ENCODE measurements at regions of chr4 and their contacts with region 1.

Region 1: DNA sequence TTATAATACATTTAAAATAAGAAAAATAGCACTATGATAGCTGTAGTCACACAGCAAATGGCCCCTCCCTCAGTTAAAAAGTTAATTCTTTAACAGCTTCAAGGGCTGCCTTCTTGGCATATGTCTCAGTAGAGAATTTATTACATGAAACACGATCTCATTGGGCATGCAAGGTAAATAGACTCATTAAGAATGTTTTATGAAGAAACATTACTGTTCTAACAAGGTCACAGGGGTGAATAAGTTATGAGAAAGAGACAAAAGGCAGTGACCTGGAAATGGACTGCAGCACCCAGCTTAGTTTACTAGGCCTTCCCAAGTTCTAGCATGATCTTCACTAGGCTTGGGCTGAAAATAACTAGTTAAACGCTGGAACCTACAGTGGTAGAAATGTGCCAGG is 277.7 kb downstream of the NR3C2 start:
- DNase-seq: no peak
- ATAC-seq: no peak
- H3K4me3 ChIP-seq: no peak overlapping the region
- H3K27ac ChIP-seq: no peak overlapping the region
- H3K4me1 ChIP-seq: no peaks in the 10 kb centered on the region
- H3K27me3 ChIP-seq: no peaks in the 10 kb centered on the region; a peak in 1 of 4 replicates
- CTCF ChIP-seq: no peak
- EP300 ChIP-seq: no peak
- POLR2A ChIP-seq: no peak
- RAD21 ChIP-seq: no peak

Region 2: GRCh38 chr4:147916351-147916750 is 248.2 kb before region 1 on chr4:
- CTCF ChIA-PET with region 1: no interaction called
- POLR2A ChIA-PET with region 1: no interaction called
- RAD21 ChIA-PET with region 1: no interaction called
- SMC1A ChIA-PET with region 1: no interaction called
- in situ Hi-C with region 1: no loop called
- intact Hi-C with region 1: loop called (anchors 5 kb)
- DNase-seq: no peak
- ATAC-seq: no peak
- H3K4me3 ChIP-seq: no peak overlapping the region
- H3K27ac ChIP-seq: no peak overlapping the region
- H3K4me1 ChIP-seq: no peaks in the 10 kb centered on the region
- H3K27me3 ChIP-seq: no peaks in the 10 kb centered on the region
- CTCF ChIP-seq: no peak
- EP300 ChIP-seq: no peak
- POLR2A ChIP-seq: no peak
- RAD21 ChIP-seq: no peak